WTC11 (cell line): ENCODE measurements at regions of chr19 and their contacts with region 1.

Region 1: GRCh38 chr19:19900729-19901444 is at the start of gene ZNF93:
- DNase-seq: peak; percentile 94
- ATAC-seq: peak; percentile 94
- H3K4me3 Mint-ChIP-seq: peak within 1 kb of the TSS; percentile 97
- H3K27ac Mint-ChIP-seq: peak within 1 kb of the TSS; percentile 100
- H3K4me1 Mint-ChIP-seq: peaks cover 51% of the 10 kb centered on the region
- H3K27me3 Mint-ChIP-seq: no peaks in the 10 kb centered on the region
- CTCF ChIP-seq: no peak
- total RNA-seq, gene ZNF93: 37.8 to 47.4 TPM (median 41.7 TPM) in 3 replicates

Region 2: GRCh38 chr19:19732579-19733501 is 168.0 kb before region 1 on chr19 and contains the start of gene ZNF14:
- CTCF ChIA-PET with region 1: no interaction called
- POLR2A ChIA-PET with region 1: interaction called, 11 read pairs
- DNase-seq: peak; percentile 97
- ATAC-seq: peak; percentile 99
- H3K4me3 Mint-ChIP-seq: peak within 1 kb of the TSS; percentile 91
- H3K27ac Mint-ChIP-seq: peak within 1 kb of the TSS; percentile 89
- H3K4me1 Mint-ChIP-seq: peaks cover 9% of the 10 kb centered on the region
- H3K27me3 Mint-ChIP-seq: peaks cover 7% of the 10 kb centered on the region
- CTCF ChIP-seq: no peak
- total RNA-seq, gene ZNF14: 5.7 to 6.6 TPM (median 6.6 TPM) in 3 replicates

Region 3: DNA sequence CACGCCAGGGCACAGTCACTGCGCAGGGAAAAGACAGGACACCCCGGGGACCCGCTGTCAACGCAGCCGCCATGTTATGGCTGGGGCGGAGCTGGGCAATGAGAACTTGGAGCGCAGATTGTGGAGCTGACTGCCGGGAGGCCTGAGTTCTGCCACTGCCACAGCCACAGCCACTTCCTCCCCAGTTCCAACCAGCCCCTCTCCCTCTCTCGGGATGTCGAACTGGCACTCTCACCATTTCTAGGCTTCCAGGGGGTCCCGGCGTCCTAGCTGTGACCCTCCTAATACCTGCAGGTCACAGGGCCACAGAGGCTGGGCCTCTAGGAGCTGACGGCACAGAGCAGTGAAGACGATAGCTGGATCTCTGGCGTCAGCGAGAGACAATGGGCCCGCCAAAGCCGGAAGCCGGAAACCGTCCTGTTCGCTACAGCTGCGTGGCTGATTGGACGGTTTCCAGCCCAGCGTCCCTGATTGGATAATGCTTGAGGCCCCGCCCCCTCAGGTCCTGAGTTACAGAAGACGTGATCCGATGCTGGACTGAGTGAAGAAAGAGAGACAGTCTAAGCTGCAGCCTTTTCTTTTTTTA is 79.4 kb before region 1 on chr19 and contains the start of gene ZNF506:
- CTCF ChIA-PET with region 1: interaction called, 4 read pairs
- POLR2A ChIA-PET with region 1: interaction called, 13 read pairs
- DNase-seq: peak; percentile 97
- ATAC-seq: peak; percentile 97
- H3K4me3 Mint-ChIP-seq: peak within 1 kb of the TSS; percentile 100
- H3K27ac Mint-ChIP-seq: peak within 1 kb of the TSS; percentile 97
- H3K4me1 Mint-ChIP-seq: no peaks in the 10 kb centered on the region
- H3K27me3 Mint-ChIP-seq: peaks cover 10% of the 10 kb centered on the region
- CTCF ChIP-seq: no peak
- total RNA-seq, gene ZNF506: 15.7 to 20.8 TPM (median 17.9 TPM) in 3 replicates

Region 4: DNA sequence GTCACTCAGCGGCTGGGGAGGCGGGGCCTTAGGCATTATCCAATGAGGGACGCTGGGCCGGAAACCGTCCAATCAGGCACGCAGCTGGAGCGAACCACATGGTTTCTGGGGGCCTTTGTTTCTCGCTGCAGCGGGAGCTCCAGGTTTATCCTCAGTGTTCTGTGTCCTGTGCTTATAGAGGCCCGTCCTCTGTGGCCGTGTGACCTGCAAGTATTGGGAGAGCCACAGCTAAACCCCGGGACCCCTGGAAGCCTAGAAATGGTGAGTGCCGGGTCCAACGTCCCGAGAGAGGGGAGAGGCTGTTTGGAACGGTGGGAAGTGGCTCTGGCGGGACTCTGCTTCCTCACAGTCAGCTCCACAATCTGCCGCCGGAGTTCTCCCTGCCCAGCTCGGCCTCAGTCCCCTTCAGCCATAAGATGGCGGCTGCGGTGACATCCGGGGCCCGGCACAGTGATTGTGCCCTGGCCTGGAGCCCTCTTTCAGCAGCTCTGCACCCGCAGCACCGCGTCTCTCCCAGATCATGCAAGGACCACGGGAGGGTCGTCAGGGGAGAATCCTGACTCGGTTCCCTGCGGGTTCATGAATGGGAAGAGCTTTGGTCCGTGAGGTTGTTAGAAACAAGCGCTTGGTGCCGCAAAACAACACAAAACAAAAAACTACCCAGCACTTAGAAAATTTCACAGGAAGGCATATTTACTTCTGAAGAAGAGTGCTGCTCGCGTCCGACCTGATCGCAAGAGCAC is 35.0 kb before region 1 on chr19 and contains the start of gene ZNF253:
- CTCF ChIA-PET with region 1: interaction called, 9 read pairs
- POLR2A ChIA-PET with region 1: interaction called, 70 read pairs
- DNase-seq: peak; percentile 99
- ATAC-seq: peak; percentile 79
- H3K4me3 Mint-ChIP-seq: peak within 1 kb of the TSS; percentile 100
- H3K27ac Mint-ChIP-seq: peak within 1 kb of the TSS; percentile 100
- H3K4me1 Mint-ChIP-seq: peaks cover 29% of the 10 kb centered on the region
- H3K27me3 Mint-ChIP-seq: no peaks in the 10 kb centered on the region; the same call in 1 of the 2 replicates
- CTCF ChIP-seq: no peak
- total RNA-seq, gene ZNF253: 31.9 to 43.6 TPM (median 37.0 TPM) in 3 replicates